ENCODE measurements at regions of chr15 and their contacts with region 1.

Region 1: DNA sequence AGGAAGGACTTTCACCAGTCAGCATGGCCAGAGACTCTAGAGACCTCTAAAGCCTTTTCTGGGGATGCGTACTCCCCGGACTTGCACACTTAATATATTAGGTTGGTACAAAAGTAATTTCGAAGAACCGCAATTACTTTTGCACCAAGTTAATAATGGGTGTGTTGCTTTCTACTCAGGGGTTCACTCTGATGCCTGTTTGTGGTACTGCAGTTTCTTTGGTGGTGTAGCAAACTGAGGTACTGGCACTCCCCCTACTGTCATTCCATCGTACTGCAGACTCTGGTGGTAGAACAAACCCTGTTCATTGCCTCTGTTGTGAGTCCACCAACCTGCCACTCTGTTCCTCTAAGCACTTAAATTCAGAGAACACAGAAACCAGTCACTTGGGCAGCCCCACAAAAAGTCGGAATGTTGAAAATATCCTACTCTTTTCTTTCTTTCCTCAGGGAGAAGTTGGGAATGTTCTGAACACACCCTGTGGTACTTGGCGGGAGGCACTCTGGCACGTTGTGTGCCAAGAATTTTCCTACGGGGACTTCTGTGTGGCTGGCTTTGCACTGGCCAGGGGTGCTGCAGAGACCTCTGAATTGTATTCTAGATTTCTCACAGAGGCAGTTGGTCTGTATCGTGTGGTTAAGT is 46.3 kb downstream of the GABRG3 start:
- DNase-seq: no peak

Region 2: DNA sequence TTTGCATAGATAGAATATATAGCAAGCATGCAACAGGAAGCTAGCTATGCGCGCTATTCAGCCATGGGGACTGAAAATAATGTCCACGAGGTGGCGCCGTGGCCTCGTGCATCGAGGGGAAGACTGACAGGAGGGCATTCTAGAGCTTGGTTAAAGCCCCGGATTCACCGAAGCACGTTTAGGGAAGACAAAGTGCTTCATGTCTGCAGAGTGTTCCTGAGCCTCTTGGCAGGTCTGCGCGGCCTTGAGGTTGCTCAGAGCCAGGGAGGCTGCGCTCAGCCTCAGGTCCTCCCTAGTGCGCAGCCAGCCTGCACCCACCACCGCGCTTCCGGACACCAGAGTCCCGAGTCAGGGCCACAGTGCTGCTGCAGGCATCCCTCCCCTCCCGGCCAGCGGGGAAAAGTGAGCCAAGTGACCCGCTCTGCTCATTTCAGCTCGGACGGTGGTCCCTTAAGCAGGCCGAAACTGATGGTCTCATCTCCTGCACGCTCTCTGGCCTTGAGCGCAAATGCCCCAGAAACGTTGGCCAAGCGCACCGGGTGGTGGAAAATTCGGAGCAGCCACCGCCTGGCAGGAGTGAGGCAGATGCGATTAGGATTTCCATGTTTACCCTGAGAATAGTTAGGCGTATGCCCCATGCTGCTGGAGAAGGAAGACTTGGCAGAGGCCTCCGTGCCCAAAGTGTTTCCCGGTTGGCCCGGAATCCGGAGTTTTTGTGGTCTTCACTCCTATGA is 125.7 kb before region 1 on chr15:
- intact Hi-C with region 1: loop called (anchors 5 kb)
- DNase-seq: no peak

Region 3: DNA sequence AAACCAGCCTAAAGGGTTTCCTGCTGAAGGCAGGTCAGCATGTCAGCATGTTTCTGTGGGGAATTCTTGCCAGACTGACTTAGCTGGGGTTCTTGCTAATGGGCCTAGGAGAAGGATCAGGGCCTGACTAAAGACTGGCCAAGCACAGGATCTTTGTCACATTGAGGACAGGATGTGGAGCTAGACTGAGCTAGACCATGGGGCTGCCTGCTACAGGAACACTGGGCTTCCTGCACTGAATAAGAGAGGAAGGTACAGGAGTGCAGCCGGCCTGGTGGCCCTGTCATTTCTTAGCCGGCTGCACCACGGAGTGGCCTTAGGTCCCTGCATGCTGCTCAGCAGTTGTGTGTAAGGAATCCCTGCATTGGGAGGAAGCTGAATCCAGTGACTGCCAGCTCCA is 21.9 kb after region 1 on chr15:
- intact Hi-C with region 1: no loop called
- DNase-seq: no peak

Measured in cardiac septum (tissue), 1 donor.